Activated CD4-positive, alpha-beta T cell treated with anti-CD3 and anti-CD28 coated beads for 36 hours (primary cell): ENCODE measurements at regions of chr1 and their contacts with region 1.

Region 1: GRCh38 chr1:150067184-150068036 is at the start of gene VPS45:
- DNase-seq: peak; percentile 93
- ATAC-seq: peak; percentile 98
- H3K4me3 Mint-ChIP-seq: peak within 1 kb of the TSS; percentile 94
- H3K27ac Mint-ChIP-seq: peak within 1 kb of the TSS; percentile 95
- H3K4me1 Mint-ChIP-seq: peaks cover 33% of the 10 kb centered on the region
- H3K27me3 Mint-ChIP-seq: no peaks in the 10 kb centered on the region
- total RNA-seq, gene VPS45: 18.5 to 20.6 TPM

Region 2: DNA sequence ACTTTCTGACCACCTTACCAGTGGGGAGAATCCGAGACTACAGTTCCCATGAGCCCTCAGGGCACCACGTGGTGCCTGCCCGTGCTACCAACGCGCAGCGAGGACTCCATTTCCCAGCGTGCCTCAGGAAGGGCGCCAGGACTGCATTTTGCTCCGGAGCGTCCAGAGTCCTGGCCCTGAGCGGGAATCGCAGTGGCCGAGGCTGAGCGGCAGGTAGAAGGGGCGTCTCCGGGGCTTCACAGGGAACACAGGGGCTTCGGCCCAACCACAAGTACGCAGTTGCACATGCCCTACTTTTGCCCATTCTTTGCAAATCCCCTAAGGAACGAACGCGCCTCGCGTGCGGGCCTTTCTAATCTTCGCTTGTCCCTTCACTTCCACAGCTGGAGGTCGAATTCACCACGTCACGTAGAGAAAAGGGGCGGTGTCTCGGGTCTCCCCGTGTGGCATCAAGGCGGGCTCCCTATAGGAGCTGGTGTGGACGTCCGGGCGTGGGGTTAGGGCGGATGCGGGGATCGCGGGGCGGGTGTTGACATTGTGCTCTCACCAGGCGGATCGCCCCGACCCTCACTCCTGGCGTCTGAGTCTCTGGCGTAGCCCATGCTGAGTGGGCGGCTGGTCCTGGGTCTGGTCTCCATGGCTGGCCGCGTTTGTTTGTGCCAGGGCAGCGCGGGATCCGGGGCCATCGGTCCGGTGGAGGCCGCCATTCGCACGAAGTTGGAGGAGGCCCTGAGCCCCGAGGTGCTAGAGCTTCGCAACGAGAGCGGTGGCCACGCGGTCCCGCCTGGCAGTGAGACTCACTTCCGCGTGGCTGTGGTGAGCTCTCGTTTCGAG is 167.7 kb before region 1 on chr1 and contains the start of gene BOLA1:
- CTCF ChIA-PET with region 1: no interaction called
- POLR2A ChIA-PET with region 1: no interaction called
- intact Hi-C with region 1: loop called in 1 of 2 experiments (anchors 2 kb)
- DNase-seq: peak; percentile 91
- ATAC-seq: peak; percentile 99
- H3K4me3 Mint-ChIP-seq: peak within 1 kb of the TSS; percentile 89
- H3K27ac Mint-ChIP-seq: peak within 1 kb of the TSS; percentile 95
- H3K4me1 Mint-ChIP-seq: peaks cover 18% of the 10 kb centered on the region
- H3K27me3 Mint-ChIP-seq: no peaks in the 10 kb centered on the region
- total RNA-seq, gene BOLA1: 24.1 to 30.0 TPM

Region 3: DNA sequence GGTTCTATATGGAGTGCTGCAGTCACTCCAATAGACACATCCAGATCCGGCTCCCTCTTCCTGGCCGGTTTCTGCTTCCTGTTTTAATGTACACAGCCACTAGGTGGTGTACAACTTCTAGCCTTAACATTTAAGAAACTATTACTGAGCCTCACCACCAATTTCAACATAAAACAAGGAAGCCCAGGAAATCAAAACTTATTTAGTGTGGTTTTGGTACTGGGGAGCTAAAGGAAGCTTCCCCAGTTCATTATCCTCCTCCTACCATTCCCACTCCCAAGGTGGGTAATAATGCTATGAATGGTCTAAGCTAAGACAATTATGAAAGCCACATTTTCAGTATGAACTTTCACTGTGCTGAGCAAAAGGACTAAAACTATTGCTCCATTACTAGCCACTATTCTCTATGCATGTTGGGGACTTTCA is 105.3 kb before region 1 on chr1:
- CTCF ChIA-PET with region 1: interaction called, 3 read pairs
- POLR2A ChIA-PET with region 1: no interaction called
- intact Hi-C with region 1: loop called in 1 of 2 experiments (anchors 1 kb)
- DNase-seq: peak; percentile 52
- ATAC-seq: peak; percentile 71
- H3K4me3 Mint-ChIP-seq: no peak overlapping the region
- H3K27ac Mint-ChIP-seq: no peak overlapping the region
- H3K4me1 Mint-ChIP-seq: peaks cover 13% of the 10 kb centered on the region
- H3K27me3 Mint-ChIP-seq: no peaks in the 10 kb centered on the region

Region 4: DNA sequence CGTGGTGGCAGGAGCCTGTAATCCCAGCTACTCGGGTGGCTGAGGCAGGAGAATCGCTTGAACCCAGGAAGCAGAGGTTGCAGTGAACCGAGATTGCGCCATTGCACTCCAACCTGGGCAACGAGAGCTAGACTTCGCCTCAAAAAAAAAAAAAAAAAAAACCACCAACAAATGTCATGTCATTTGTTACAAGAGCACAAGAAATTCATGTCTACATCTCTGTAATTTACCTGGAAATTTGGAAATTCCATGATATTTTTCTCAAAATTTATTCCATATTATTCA is 16.4 kb before region 1 on chr1:
- CTCF ChIA-PET with region 1: interaction called, 10 read pairs
- POLR2A ChIA-PET with region 1: no interaction called
- intact Hi-C with region 1: no loop called
- DNase-seq: no peak
- ATAC-seq: no peak
- H3K4me3 Mint-ChIP-seq: no peak overlapping the region
- H3K27ac Mint-ChIP-seq: no peak overlapping the region
- H3K4me1 Mint-ChIP-seq: peaks cover 2% of the 10 kb centered on the region
- H3K27me3 Mint-ChIP-seq: peaks cover 3% of the 10 kb centered on the region

Region 5: GRCh38 chr1:150102986-150103385 is 35.6 kb after region 1 on chr1:
- CTCF ChIA-PET with region 1: no interaction called
- POLR2A ChIA-PET with region 1: no interaction called
- intact Hi-C with region 1: no loop called
- DNase-seq: no peak
- ATAC-seq: no peak
- H3K4me3 Mint-ChIP-seq: no peak overlapping the region
- H3K27ac Mint-ChIP-seq: no peak overlapping the region
- H3K4me1 Mint-ChIP-seq: peaks cover 48% of the 10 kb centered on the region
- H3K27me3 Mint-ChIP-seq: no peaks in the 10 kb centered on the region

Region 6: DNA sequence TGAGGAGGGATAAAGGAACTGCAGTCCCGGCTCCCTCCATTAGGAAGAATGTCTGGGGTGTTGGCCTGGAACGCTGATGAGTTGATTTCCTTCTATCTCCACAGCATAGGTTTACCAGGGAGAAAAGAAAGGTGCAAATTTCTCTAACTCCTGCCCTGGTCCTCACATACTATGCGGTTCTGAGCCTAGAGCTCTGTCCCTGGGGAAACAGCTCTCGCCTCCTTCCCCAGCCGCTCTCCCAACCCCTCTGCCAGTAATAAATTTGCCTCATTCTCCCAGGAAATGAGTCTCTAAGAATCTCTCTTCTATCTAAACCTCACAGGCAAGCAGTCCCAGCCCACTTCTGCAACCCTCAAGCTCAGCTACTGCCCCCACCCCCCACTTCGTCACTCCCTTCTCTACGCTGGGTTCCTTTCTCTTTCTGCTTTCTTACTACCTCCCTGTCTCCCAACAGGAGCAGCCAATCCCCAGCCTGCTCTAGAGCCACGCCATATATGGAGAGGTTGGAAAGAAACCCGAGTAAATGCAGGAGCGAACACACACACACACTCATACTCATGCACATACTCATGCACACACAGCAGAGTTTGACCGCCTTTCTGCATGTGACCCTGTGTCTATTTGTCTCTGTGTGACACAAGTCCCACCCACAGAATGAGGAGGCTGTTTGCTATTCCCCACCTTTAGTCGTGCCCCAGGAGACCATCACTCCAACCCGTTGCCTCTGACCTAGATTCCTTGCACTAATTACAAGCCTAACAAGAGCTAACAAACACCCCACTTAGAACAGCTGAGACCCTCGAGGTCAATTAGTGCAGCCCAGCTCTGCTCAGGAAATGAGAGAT is 95.7 kb after region 1 on chr1:
- CTCF ChIA-PET with region 1: interaction called, 65 read pairs
- POLR2A ChIA-PET with region 1: no interaction called
- intact Hi-C with region 1: no loop called
- DNase-seq: peak; percentile 60
- ATAC-seq: peak; percentile 63
- H3K4me3 Mint-ChIP-seq: no peak overlapping the region
- H3K27ac Mint-ChIP-seq: no peak overlapping the region
- H3K4me1 Mint-ChIP-seq: peaks cover 39% of the 10 kb centered on the region
- H3K27me3 Mint-ChIP-seq: no peaks in the 10 kb centered on the region

Region 7: DNA sequence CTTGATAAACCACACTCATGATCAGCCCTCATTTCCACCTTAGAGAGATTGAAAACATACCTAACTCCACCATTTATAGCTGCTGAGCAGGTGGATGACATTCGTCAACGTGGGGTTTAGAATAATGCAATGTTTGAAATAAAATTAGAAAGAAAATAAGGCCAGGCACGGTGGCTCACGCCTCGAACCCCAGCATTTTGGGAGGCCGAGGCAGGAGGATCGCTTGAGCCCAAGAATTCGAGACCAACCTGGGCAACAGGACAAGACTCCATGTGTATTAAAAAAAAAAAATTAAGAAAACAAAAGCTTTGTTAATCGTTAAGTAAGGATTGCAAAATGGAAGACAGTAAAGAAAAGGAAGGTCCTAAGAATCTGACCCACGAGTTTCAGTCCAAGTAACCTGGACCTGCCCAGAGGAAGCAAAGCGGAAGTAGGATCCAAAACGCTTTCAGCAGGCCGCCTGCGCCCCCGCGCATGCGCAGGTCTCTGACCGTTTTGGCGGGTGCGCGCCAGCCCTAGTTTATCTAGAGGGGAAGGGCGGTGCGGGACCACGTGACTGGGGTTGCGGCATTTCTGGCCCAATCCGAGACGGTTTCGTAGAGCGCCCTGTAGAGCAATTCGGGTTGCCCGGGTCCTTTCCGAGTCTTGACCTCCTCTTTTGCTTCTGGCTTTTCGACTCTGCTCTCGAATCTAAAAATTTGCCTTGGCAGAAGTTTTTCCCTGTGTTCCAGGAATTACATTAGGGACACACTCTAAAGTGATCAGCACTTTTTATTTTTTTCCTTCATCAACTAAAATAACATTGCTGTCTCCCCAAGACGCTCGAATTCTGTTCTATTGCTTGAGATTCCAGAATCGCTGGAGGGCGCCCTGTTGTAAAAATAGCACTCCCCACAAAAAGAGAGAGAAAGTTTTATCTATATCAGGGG is 146.0 kb after region 1 on chr1:
- CTCF ChIA-PET with region 1: no interaction called
- POLR2A ChIA-PET with region 1: interaction called, 3 read pairs
- intact Hi-C with region 1: loop called in 1 of 2 experiments (anchors 1 kb)
- DNase-seq: peak; percentile 96
- ATAC-seq: peak; percentile 100
- H3K4me3 Mint-ChIP-seq: peak overlapping the region; percentile 73
- H3K27ac Mint-ChIP-seq: peak overlapping the region; percentile 96
- H3K4me1 Mint-ChIP-seq: peaks cover 19% of the 10 kb centered on the region
- H3K27me3 Mint-ChIP-seq: no peaks in the 10 kb centered on the region